B cell (primary cell): ENCODE measurements at regions of chr15 and their contacts with region 1.

Region 1: GRCh38 chr15:90387537-90388461 is at the start of gene IQGAP1:
- DNase-seq: peak; percentile 97
- ATAC-seq: peak; percentile 86
- H3K4me3 ChIP-seq: peak within 1 kb of the TSS; percentile 72 to 93 (median 87)
- H3K4me3 Mint-ChIP-seq: peak within 1 kb of the TSS; percentile 92
- H3K27ac ChIP-seq: peak within 1 kb of the TSS; percentile 91 to 95
- H3K27ac Mint-ChIP-seq: peak within 1 kb of the TSS; percentile 99
- H3K4me1 ChIP-seq: peaks cover 22 to 26% of the 10 kb centered on the region in 2 donors
- H3K4me1 Mint-ChIP-seq: peaks cover 36% of the 10 kb centered on the region
- H3K27me3 ChIP-seq: no peaks in the 10 kb centered on the region
- H3K27me3 Mint-ChIP-seq: no peaks in the 10 kb centered on the region
- CTCF ChIP-seq: no peak
- total RNA-seq, gene IQGAP1: 216 and 233 TPM in 2 replicates

Region 2: GRCh38 chr15:90352109-90352893 is 35.5 kb before region 1 on chr15 and contains the start of gene ZNF774:
- CTCF ChIA-PET with region 1: interaction called, 4 read pairs
- POLR2A ChIA-PET with region 1: interaction called, 3 read pairs
- intact Hi-C with region 1: loop called (anchors 1 kb)
- DNase-seq: peak; percentile 97
- ATAC-seq: peak; percentile 99
- H3K4me3 ChIP-seq: peak within 1 kb of the TSS; percentile 53 to 86 (median 81)
- H3K4me3 Mint-ChIP-seq: peak within 1 kb of the TSS; percentile 90
- H3K27ac ChIP-seq: peak within 1 kb of the TSS in 1 of 2 donors; percentile 60
- H3K27ac Mint-ChIP-seq: peak within 1 kb of the TSS; percentile 71
- H3K4me1 ChIP-seq: peaks cover 3 to 10% of the 10 kb centered on the region in 2 donors
- H3K4me1 Mint-ChIP-seq: peaks cover 7% of the 10 kb centered on the region
- H3K27me3 ChIP-seq: no peaks in the 10 kb centered on the region
- H3K27me3 Mint-ChIP-seq: no peaks in the 10 kb centered on the region
- CTCF ChIP-seq: no peak
- total RNA-seq, gene ZNF774: 0.54 and 1.4 TPM in 2 replicates

Region 3: GRCh38 chr15:90400406-90401314 is 12.9 kb after region 1 on chr15:
- CTCF ChIA-PET with region 1: interaction called, 8 read pairs
- POLR2A ChIA-PET with region 1: interaction called, 7 read pairs
- intact Hi-C with region 1: loop called (anchors 1 kb)
- DNase-seq: peak; percentile 90
- ATAC-seq: peak; percentile 96
- H3K4me3 ChIP-seq: peak overlapping the region in 3 of 5 experiments; percentile 7 to 54 (median 29)
- H3K4me3 Mint-ChIP-seq: peak overlapping the region; percentile 78
- H3K27ac ChIP-seq: peak overlapping the region; percentile 92 to 95
- H3K27ac Mint-ChIP-seq: peak overlapping the region; percentile 96
- H3K4me1 ChIP-seq: peaks cover 31 to 36% of the 10 kb centered on the region in 2 donors
- H3K4me1 Mint-ChIP-seq: peaks cover 62% of the 10 kb centered on the region
- H3K27me3 ChIP-seq: no peaks in the 10 kb centered on the region
- H3K27me3 Mint-ChIP-seq: no peaks in the 10 kb centered on the region
- CTCF ChIP-seq: no peak

Region 4: GRCh38 chr15:90436952-90437351 is 49.2 kb after region 1 on chr15:
- CTCF ChIA-PET with region 1: no interaction called
- POLR2A ChIA-PET with region 1: interaction called, 3 read pairs
- intact Hi-C with region 1: loop called (anchors 10 kb)
- DNase-seq: no peak
- ATAC-seq: no peak
- H3K4me3 ChIP-seq: no peak overlapping the region
- H3K4me3 Mint-ChIP-seq: no peak overlapping the region
- H3K27ac ChIP-seq: peak overlapping the region in 1 of 2 donors; percentile 44
- H3K27ac Mint-ChIP-seq: no peak overlapping the region
- H3K4me1 ChIP-seq: no peaks in the 10 kb centered on the region
- H3K4me1 Mint-ChIP-seq: peaks cover 5% of the 10 kb centered on the region
- H3K27me3 ChIP-seq: no peaks in the 10 kb centered on the region
- H3K27me3 Mint-ChIP-seq: no peaks in the 10 kb centered on the region
- CTCF ChIP-seq: no peak